ENCODE measurements at regions of chr17 and their contacts with region 1.

Region 1: DNA sequence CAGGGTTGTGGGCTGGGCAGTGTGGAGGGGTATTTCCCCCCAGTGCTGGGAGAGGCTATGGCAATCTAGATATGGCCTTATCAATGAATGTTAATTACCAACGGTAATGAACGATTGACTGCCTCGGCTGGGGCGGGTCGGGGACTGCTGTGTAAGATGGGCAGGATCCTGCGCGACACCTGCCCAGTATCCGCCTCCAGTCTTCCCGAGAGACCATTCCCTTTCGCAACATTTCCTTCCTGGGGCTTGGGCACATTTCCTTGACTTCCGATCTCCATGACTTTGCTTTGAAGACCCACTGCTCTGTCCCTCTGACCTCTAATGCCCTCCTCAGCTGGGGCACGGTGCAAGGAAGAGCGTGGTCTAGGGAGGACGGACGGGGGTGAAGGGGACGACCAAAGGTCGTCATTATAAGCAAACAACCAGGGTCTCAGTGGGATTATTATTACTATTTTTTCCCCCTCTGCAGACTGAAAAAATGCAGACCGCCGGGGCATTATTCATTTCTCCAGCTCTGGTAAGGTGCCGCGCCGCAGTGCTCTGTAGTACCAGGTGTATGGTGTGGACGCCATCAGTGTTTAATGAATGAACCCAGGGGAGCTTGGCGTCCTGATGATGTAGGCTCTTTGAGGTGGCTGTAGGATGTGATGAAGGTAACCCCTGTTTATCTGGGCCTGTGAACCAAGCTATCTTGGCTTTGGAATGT is 506 bp downstream of the ATP5MC1 start:
- DNase-seq: peak; percentile 30
- ATAC-seq: no peak
- H3K4me3 Mint-ChIP-seq: peak overlapping the region; percentile 86
- H3K27ac Mint-ChIP-seq: peak overlapping the region; percentile 97
- H3K4me1 Mint-ChIP-seq: peaks cover 29% of the 10 kb centered on the region
- H3K27me3 Mint-ChIP-seq: no peaks in the 10 kb centered on the region

Region 2: DNA sequence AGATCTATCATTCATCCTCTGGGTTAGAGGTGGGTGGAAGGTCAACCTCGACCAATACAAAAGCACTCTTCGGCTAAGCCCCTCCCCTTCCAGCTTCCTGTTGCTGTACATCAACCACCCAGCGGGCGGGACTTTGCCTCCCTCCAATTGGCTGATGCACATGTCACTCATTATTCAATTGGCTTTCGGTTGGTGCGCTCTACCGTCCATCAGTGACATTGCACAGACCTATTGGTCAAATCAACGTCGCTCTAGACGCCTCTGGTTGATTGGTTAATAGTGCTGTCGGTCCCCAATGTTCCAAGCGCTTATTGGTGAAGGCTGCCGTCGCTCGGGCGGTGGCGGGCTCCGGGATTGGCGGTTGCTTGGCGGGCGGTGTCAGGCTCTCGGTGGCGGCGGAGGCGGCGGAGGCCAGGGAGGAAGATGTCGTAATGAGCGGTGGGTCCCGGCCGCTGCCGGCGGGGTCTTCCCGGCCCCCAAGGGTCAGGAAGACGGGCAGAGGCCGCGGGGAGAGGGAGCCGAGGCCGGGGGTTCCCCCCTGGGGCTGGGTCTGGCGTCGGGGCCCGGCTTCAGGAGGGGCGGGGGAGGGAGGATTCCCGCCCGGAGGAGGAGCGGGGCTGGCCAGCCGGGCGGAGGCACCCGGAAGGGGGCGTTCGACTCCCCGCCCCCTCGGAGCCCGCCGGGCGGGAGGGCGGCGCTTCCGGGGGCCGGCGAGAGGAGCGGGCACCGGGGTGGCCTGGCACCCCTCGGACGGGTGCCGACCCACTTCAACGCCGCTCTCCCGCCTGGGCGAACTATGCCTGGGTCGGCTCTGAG is 997.0 kb before region 1 on chr17 and contains the start of gene SP2:
- CTCF ChIA-PET with region 1: no interaction called
- POLR2A ChIA-PET with region 1: no interaction called
- intact Hi-C with region 1: loop called in 1 of 2 experiments (anchors 1 kb)
- DNase-seq: peak; percentile 99
- ATAC-seq: peak; percentile 94
- H3K4me3 Mint-ChIP-seq: peak within 1 kb of the TSS; percentile 96
- H3K27ac Mint-ChIP-seq: peak within 1 kb of the TSS; percentile 96
- H3K4me1 Mint-ChIP-seq: peaks cover 46% of the 10 kb centered on the region
- H3K27me3 Mint-ChIP-seq: no peaks in the 10 kb centered on the region
- total RNA-seq, gene SP2: 15.7 to 19.8 TPM

Region 3: DNA sequence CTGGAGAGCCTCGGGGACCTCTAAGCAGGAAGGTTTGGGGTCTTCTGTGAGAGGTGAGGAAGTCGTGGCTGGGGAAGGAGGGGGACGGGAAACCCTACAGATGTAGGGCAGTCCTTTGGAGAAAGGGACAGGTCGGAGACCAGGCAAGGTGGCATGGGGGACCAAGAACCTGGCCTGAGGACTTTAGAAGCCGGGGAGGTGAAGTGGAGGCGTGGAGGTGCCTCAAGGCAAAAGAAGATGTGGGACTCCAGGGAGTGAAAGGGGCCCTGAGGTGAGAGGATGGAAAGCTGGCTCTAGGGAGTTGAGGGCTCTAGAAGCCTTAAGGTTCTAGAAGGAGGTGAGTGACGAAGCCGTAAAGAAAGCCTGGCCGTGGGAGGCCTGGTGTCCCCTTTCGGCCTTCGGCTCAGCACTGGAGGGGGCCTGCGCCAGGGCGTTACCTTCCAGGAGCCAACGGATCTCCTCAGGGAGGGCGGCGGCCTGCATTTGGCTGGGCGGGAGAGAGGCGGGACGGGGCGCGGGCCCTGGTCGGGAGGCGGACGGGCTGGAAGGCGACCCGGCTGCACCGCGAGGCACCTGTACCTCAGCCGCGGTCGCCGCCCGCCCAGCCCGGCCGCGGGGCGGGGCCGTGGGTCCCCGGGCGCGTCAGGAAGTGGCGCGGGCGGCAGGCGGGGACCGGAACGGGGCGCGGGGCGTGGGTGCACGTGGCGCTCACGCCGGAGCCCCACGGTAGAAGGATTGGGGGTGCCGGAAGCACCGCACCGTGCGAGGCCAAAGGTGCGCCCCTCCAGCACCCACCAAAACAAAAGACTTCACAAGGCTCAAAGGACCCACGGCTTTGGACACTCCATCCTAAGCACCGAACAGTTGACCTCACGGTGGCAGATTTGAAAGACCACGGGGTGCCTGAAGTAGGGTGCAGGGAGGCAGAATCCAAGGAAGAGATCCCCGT is 463.2 kb before region 1 on chr17 and contains the start of gene SKAP1:
- CTCF ChIA-PET with region 1: no interaction called
- POLR2A ChIA-PET with region 1: no interaction called
- intact Hi-C with region 1: loop called in 1 of 2 experiments (anchors 10 kb)
- DNase-seq: peak; percentile 77
- ATAC-seq: peak; percentile 62
- H3K4me3 Mint-ChIP-seq: peak within 1 kb of the TSS; percentile 94
- H3K27ac Mint-ChIP-seq: peak within 1 kb of the TSS; percentile 98
- H3K4me1 Mint-ChIP-seq: peaks cover 57% of the 10 kb centered on the region
- H3K27me3 Mint-ChIP-seq: no peaks in the 10 kb centered on the region
- total RNA-seq, gene SKAP1: 76.1 to 109 TPM

Region 4: GRCh38 chr17:48690655-48691054 is 202.4 kb before region 1 on chr17:
- CTCF ChIA-PET with region 1: no interaction called
- POLR2A ChIA-PET with region 1: no interaction called
- intact Hi-C with region 1: no loop called
- DNase-seq: no peak
- ATAC-seq: no peak
- H3K4me3 Mint-ChIP-seq: no peak overlapping the region
- H3K27ac Mint-ChIP-seq: no peak overlapping the region
- H3K4me1 Mint-ChIP-seq: no peaks in the 10 kb centered on the region
- H3K27me3 Mint-ChIP-seq: peaks cover 10% of the 10 kb centered on the region

Region 5: DNA sequence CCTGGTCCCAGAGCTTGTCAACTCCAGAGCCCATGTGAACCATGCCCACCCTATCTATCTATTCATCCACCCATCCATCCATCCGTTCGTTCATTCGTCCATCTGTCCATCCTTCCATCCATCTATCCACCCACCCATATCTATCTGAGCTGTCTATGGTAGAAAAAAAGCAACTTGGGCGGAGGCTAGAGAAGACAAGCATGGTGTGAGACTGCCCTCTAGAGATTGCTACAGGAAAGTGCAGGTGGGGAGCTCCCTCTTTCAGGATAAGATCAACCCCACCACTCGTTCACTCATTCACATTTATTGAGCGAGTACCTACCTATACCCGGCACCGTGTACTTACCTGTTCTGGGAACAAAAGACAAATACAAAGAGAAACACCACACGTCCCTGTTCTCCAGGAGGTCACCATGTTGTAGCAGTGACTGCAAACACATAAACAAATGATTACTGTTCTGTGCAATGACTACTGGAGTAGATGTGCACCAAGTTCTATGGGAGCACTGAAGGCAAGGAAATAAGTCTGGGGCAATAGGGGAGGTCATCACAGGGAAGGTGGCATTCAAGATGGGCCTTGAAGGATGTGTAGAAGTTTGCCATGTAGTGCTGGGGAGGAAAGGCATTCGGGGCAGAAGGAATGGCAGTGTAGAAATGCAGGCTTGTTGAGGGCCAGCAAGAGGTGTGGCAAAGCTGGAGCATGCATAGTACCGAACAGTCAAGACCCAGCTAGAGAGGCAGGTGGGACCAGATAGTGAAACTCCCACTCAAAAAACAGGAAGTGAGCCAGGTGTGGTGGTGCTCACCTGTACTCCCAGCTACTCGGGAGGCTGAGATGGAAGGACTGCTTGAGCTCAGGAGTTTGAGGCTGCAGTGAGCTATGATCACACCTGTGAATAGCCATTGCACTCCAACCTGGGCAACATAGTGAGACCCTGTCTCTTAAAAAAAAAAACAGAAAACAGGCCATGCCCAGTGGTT is 13.9 kb before region 1 on chr17:
- CTCF ChIA-PET with region 1: interaction called, 23 read pairs
- POLR2A ChIA-PET with region 1: no interaction called
- intact Hi-C with region 1: no loop called
- DNase-seq: peak; percentile 64
- ATAC-seq: peak; percentile 90
- H3K4me3 Mint-ChIP-seq: no peak overlapping the region
- H3K27ac Mint-ChIP-seq: no peak overlapping the region
- H3K4me1 Mint-ChIP-seq: no peaks in the 10 kb centered on the region
- H3K27me3 Mint-ChIP-seq: peaks cover 5% of the 10 kb centered on the region

Region 6: GRCh38 chr17:48915459-48916282 is 22.6 kb after region 1 on chr17:
- CTCF ChIA-PET with region 1: interaction called, 8 read pairs
- POLR2A ChIA-PET with region 1: interaction called, 16 read pairs
- intact Hi-C with region 1: loop called (anchors 1 kb)
- DNase-seq: peak; percentile 77
- ATAC-seq: peak; percentile 95
- H3K4me3 Mint-ChIP-seq: peak overlapping the region; percentile 73
- H3K27ac Mint-ChIP-seq: peak overlapping the region; percentile 96
- H3K4me1 Mint-ChIP-seq: peaks cover 59% of the 10 kb centered on the region
- H3K27me3 Mint-ChIP-seq: no peaks in the 10 kb centered on the region

Region 7: GRCh38 chr17:49157784-49158183 is 264.7 kb after region 1 on chr17:
- CTCF ChIA-PET with region 1: no interaction called
- POLR2A ChIA-PET with region 1: no interaction called
- intact Hi-C with region 1: no loop called
- DNase-seq: no peak
- ATAC-seq: no peak
- H3K4me3 Mint-ChIP-seq: no peak overlapping the region
- H3K27ac Mint-ChIP-seq: no peak overlapping the region
- H3K4me1 Mint-ChIP-seq: no peaks in the 10 kb centered on the region
- H3K27me3 Mint-ChIP-seq: peaks cover 25% of the 10 kb centered on the region

Region 8: GRCh38 chr17:49290690-49291359 is 397.7 kb after region 1 on chr17:
- CTCF ChIA-PET with region 1: no interaction called
- POLR2A ChIA-PET with region 1: no interaction called
- intact Hi-C with region 1: no loop called
- DNase-seq: peak; percentile 20
- ATAC-seq: no peak
- H3K4me3 Mint-ChIP-seq: no peak overlapping the region
- H3K27ac Mint-ChIP-seq: no peak overlapping the region
- H3K4me1 Mint-ChIP-seq: peaks cover 6% of the 10 kb centered on the region
- H3K27me3 Mint-ChIP-seq: no peaks in the 10 kb centered on the region

Region 9: DNA sequence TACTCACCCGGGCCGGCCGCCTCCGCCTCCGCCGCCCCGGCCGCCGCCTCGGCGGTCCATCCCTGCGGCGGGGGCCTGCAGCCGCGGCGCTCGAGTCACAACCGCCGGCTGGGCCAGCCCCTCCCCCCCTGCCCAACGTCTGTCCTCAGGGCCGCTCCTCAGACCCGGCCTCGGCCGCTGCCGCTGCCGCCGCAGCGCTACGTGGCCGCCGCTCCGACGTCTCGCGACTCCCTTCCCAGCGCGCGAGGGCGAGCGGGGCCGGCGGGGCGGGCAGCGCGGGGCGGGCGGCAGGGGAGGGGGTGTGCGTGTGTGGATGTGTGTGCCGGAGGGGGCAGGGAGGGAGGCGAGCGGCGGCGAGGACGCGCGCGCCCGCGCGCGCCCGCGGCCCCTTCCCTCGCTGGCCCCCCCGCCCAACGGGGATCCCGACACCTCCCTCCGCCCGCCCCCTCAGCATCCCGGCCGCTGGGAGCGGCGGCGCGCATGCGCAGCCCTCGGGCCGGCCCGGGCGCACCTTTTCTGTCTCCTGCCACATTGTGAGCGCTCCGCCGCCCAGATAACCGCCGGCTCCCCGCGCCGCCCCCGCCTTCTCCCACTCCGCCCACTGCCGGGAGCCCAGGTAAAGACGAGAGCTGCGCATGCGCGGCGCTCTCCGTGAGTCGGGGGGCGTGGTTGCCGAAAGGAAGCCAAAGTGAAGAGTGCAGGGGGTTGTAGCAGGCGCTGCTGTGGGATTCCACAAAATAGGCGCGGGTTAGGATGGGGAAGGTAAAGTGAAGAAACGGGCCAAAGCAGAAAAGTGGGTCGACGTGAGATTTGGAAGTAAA is 469.0 kb after region 1 on chr17 and contains the start of gene ZNF652:
- CTCF ChIA-PET with region 1: no interaction called
- POLR2A ChIA-PET with region 1: no interaction called
- intact Hi-C with region 1: loop called in 1 of 2 experiments (anchors 5 kb)
- DNase-seq: peak; percentile 93
- ATAC-seq: peak; percentile 57
- H3K4me3 Mint-ChIP-seq: peak within 1 kb of the TSS; percentile 92
- H3K27ac Mint-ChIP-seq: peak within 1 kb of the TSS; percentile 92
- H3K4me1 Mint-ChIP-seq: peaks cover 50% of the 10 kb centered on the region
- H3K27me3 Mint-ChIP-seq: peaks cover 1% of the 10 kb centered on the region
- total RNA-seq, gene ZNF652: 5.2 to 7.0 TPM

Region 10: DNA sequence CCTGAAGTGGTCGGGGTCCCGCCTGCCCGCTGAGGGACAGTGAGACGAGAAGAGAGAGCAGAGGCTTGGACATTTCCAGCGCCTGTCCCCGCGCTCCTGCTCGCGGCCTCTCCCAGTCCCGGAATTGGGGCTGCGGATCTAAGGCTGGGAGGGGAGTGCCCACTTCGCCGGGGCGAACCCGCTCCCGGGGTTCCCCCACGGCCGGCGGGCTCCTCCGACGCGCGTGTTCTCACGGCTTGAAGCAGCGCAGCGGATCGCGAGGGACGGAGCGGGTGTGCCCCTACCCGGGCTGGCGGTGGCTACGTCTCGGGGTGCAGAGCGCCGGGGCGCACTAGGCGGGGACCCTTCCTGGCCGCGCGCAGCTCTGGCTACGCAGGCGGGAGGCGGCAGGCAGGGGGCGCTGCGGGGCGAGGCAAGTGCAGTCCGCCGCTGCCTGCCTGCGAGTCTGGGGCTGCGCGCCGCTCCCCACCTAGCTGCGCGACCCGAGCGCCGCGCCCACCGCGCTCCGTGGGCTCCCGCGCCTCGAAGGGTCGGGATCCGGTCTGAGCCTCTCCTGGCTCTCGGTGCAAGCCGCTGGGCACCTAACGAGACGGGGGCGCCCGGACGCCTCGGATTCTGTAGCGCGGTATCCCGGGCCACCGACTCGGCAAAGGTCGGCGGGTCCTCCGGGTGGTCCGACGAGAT is 603.2 kb after region 1 on chr17:
- CTCF ChIA-PET with region 1: no interaction called
- POLR2A ChIA-PET with region 1: no interaction called
- intact Hi-C with region 1: no loop called
- DNase-seq: peak; percentile 92
- ATAC-seq: peak; percentile 85
- H3K4me3 Mint-ChIP-seq: peak overlapping the region; percentile 63
- H3K27ac Mint-ChIP-seq: no peak overlapping the region
- H3K4me1 Mint-ChIP-seq: peaks cover 16% of the 10 kb centered on the region
- H3K27me3 Mint-ChIP-seq: peaks cover 51% of the 10 kb centered on the region